CD4-positive, alpha-beta T cell (primary cell): ENCODE measurements at regions of chr12 and their contacts with region 1.

Region 1: DNA sequence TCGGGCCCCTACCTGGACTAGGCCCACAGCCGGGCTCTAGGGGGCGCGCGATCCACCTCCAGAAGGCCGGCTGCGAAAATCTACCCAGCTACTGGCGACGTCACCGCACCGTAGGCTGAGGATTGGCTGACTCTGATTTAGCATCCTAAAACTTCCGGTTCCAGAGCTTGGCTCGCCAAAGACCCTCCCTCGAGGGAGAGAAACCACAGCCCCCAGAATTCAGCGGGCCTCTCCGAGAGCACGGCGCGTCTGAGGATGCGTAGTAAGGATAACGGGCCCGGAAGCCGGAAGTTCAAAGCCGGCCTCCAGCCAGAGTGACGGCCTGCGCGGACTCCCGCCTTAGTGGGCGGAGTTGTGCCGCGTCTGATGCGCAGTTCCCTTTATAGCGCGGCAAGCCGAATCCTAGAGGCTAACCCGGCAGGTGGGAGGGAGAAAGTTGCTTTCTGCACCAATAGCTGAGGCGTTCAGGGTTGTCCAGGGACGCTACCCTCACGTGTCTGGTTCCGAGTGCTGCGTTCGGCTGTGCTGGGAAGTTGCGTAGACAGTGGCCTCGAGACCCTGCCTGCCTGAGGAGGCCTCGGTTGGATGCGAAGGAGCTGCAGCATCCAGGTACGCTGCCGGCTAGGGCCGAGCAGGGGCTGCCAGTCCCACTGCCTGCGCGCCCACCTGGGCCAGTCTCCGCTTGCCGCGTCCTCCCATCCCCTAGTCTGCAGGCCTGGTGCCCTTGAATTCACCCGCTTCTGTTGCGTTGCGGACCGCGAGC is at the start of gene COX14:
- DNase-seq: peak; percentile 97 to 100 (median 99)
- ATAC-seq: peak; percentile 83
- H3K4me3 ChIP-seq: peak within 1 kb of the TSS; percentile 100
- H3K4me3 Mint-ChIP-seq: peak within 1 kb of the TSS; percentile 95
- H3K27ac ChIP-seq: peak within 1 kb of the TSS; percentile 87 to 97
- H3K27ac Mint-ChIP-seq: peak within 1 kb of the TSS; percentile 96
- H3K4me1 ChIP-seq: peaks cover 55% of the 10 kb centered on the region
- H3K4me1 Mint-ChIP-seq: peaks cover 39% of the 10 kb centered on the region
- H3K27me3 ChIP-seq: no peaks in the 10 kb centered on the region
- H3K27me3 Mint-ChIP-seq: no peaks in the 10 kb centered on the region
- CTCF ChIP-seq: peak; percentile 97
- total RNA-seq, gene COX14: 51.1 to 52.8 TPM

Region 2: DNA sequence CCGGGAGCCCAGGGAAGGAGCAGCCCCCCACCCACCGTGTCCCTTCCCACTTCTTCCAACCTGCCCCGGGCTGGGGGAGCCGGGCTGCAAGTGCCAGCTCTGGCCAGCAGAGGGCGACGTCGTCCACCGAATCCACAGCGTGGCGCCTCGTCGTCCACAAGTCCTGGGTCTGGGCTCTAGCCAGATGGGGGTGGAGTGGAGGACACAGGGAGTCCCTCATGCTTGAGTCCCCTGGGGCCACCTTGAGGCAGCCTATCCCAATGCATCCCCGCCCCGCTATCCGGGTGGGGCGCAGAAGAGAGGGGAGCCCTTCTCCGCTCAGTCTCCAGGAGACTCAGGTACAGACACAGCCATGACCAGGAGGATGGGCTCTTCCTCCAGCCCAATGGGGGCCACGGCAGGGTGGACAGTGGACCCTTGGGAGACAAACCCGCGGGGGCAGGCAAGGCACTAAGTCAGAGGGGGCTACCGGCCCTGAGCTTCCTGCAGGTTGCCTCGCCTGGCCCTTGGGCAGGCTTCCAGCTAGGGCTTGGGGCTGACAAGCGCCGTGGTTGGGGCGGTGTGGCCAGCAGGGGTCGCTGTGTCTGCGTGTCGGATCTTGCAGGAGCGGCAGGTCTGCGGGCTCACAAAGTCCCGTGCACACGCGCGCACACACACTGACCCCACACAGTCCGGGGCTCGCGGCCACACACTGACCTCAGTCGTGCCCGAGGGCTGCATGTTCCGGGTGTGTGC is 144.7 kb before region 1 on chr12:
- CTCF ChIA-PET with region 1: interaction called, 11 read pairs
- POLR2A ChIA-PET with region 1: interaction called, 3 read pairs
- intact Hi-C with region 1: no loop called
- DNase-seq: peak; percentile 87 to 97 (median 93)
- ATAC-seq: peak; percentile 85
- H3K4me3 ChIP-seq: peak overlapping the region; percentile 57
- H3K4me3 Mint-ChIP-seq: peak overlapping the region; percentile 70
- H3K27ac ChIP-seq: no peak overlapping the region
- H3K27ac Mint-ChIP-seq: no peak overlapping the region
- H3K4me1 ChIP-seq: peaks cover 17% of the 10 kb centered on the region
- H3K4me1 Mint-ChIP-seq: peaks cover 5% of the 10 kb centered on the region
- H3K27me3 ChIP-seq: peaks cover 22 to 46% of the 10 kb centered on the region in 2 experiments
- H3K27me3 Mint-ChIP-seq: peaks cover 47% of the 10 kb centered on the region
- CTCF ChIP-seq: peak; percentile 96

Region 3: DNA sequence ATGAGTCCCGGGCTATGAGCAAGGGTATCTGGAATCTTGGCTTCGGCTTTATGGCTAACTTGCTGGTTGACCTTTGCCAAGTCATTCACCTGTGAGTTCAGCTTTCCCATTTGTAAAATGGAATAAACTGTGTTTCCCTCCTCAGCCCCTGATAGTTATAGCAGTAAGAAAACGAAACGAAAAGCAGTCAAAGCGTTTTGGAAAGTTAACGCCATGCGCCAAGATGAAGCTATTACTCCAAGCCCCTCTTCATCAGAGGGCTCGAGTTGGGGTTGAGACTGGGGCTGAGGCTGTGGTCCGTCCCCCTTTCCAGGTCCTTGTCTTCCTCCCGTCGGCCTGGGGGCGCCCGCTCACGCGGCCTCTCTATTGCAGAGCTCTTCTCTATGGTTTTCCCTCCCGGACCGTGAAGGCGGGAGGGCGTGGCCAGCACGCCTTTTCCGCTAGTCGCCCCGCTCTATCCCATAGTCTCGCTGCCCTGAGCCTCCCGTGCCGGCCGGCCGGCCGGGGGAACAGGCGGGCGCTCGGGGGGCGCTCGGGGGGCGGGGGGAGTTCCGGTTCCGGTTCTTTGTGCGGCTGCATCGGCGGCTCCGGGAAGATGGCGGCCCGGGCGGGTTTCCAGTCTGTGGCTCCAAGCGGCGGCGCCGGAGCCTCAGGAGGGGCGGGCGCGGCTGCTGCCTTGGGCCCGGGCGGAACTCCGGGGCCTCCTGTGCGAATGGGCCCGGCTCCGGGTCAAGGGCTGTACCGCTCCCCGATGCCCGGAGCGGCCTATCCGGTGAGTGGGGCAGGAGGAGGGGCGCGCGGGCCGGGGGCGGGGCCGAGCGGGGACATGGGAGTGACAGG is 26.9 kb before region 1 on chr12 and contains the start of gene SMARCD1:
- CTCF ChIA-PET with region 1: interaction called, 83 read pairs
- POLR2A ChIA-PET with region 1: interaction called, 127 read pairs
- intact Hi-C with region 1: loop called (anchors 1 to 2 kb)
- DNase-seq: peak; percentile 70 to 93 (median 84)
- ATAC-seq: peak; percentile 83
- H3K4me3 ChIP-seq: peak within 1 kb of the TSS; percentile 95
- H3K4me3 Mint-ChIP-seq: peak within 1 kb of the TSS; percentile 96
- H3K27ac ChIP-seq: peak within 1 kb of the TSS; percentile 82 to 95
- H3K27ac Mint-ChIP-seq: peak within 1 kb of the TSS; percentile 99
- H3K4me1 ChIP-seq: peaks cover 21% of the 10 kb centered on the region
- H3K4me1 Mint-ChIP-seq: peaks cover 43% of the 10 kb centered on the region
- H3K27me3 ChIP-seq: no peaks in the 10 kb centered on the region
- H3K27me3 Mint-ChIP-seq: no peaks in the 10 kb centered on the region
- CTCF ChIP-seq: peak; percentile 45
- total RNA-seq, gene SMARCD1: 78.9 to 80.0 TPM

Region 4: DNA sequence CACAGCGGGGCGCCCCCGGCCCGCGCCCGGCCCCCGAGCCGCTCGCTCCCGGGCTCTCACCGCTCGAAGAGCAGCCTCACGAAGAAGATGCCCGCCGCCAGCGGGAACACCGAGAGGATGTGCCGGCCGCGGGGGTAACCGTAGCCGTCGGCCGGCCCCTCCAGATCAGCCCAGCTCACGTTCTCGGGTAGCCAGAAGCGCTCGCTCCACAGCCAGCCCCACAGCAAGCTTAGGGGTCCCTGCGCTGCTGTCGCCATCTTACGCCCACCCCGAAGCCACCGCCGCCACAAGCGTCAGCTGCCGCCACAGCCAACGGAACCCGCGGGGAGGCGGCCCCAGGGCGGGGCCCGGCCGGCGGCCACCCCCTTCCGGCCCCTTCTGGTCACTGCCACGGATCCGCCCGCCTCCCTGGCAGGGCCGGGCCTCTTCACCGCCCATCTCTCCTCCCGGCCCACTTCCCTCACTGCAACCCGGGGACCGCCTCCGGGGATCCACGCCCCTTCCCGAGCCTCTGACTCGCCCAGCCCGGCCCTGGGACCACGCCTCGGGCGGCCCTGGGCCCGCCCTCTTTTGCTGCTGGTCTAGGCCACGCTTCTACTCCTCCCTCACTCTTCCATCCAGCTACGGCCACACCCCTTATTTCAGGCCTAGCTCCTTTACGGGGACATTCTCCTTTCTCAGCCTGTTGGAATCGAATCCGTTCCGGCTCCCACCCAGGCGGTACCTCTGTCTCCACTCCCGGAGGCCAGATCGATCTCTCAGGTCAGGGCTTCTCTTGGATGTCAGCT is 55.4 kb after region 1 on chr12 and contains the start of gene CERS5:
- CTCF ChIA-PET with region 1: interaction called, 34 read pairs
- POLR2A ChIA-PET with region 1: interaction called, 80 read pairs
- intact Hi-C with region 1: loop called (anchors 1 to 2 kb)
- DNase-seq: peak; percentile 91 to 99 (median 94)
- ATAC-seq: peak; percentile 96
- H3K4me3 ChIP-seq: peak within 1 kb of the TSS; percentile 84
- H3K4me3 Mint-ChIP-seq: peak within 1 kb of the TSS; percentile 95
- H3K27ac ChIP-seq: peak within 1 kb of the TSS; percentile 85
- H3K27ac Mint-ChIP-seq: peak within 1 kb of the TSS; percentile 81
- H3K4me1 ChIP-seq: peaks cover 20% of the 10 kb centered on the region
- H3K4me1 Mint-ChIP-seq: peaks cover 34% of the 10 kb centered on the region
- H3K27me3 ChIP-seq: no peaks in the 10 kb centered on the region
- H3K27me3 Mint-ChIP-seq: no peaks in the 10 kb centered on the region
- CTCF ChIP-seq: no peak
- total RNA-seq, gene CERS5: 42.3 to 44.5 TPM

Region 5: GRCh38 chr12:50222275-50222795 is 110.5 kb after region 1 on chr12:
- CTCF ChIA-PET with region 1: interaction called, 8 read pairs
- POLR2A ChIA-PET with region 1: interaction called, 27 read pairs
- intact Hi-C with region 1: no loop called
- DNase-seq: peak in 4 of 14 experiments; percentile 30 to 64 (median 62)
- ATAC-seq: peak; percentile 49
- H3K4me3 ChIP-seq: peak overlapping the region; percentile 83
- H3K4me3 Mint-ChIP-seq: no peak overlapping the region
- H3K27ac ChIP-seq: peak overlapping the region; percentile 51 to 82
- H3K27ac Mint-ChIP-seq: no peak overlapping the region
- H3K4me1 ChIP-seq: peaks cover 53% of the 10 kb centered on the region
- H3K4me1 Mint-ChIP-seq: peaks cover 25% of the 10 kb centered on the region
- H3K27me3 ChIP-seq: no peaks in the 10 kb centered on the region
- H3K27me3 Mint-ChIP-seq: no peaks in the 10 kb centered on the region
- CTCF ChIP-seq: no peak

Region 6: GRCh38 chr12:51077971-51078370 is 966.1 kb after region 1 on chr12:
- CTCF ChIA-PET with region 1: no interaction called
- POLR2A ChIA-PET with region 1: no interaction called
- intact Hi-C with region 1: no loop called
- DNase-seq: no peak
- ATAC-seq: no peak
- H3K4me3 ChIP-seq: no peak overlapping the region
- H3K4me3 Mint-ChIP-seq: no peak overlapping the region
- H3K27ac ChIP-seq: no peak overlapping the region
- H3K27ac Mint-ChIP-seq: no peak overlapping the region
- H3K4me1 ChIP-seq: peaks cover 22% of the 10 kb centered on the region
- H3K4me1 Mint-ChIP-seq: peaks cover 58% of the 10 kb centered on the region
- H3K27me3 ChIP-seq: no peaks in the 10 kb centered on the region
- H3K27me3 Mint-ChIP-seq: no peaks in the 10 kb centered on the region
- CTCF ChIP-seq: no peak